Right ventricle myocardium inferior (tissue), 1 donor: ENCODE measurements at regions of chr1 and their contacts with region 1.

Region 1: GRCh38 chr1:183655562-183656075 is 2.5 kb upstream of the APOBEC4 start:
- DNase-seq: peak; percentile 72
- ATAC-seq: peak; percentile 76

Region 2: DNA sequence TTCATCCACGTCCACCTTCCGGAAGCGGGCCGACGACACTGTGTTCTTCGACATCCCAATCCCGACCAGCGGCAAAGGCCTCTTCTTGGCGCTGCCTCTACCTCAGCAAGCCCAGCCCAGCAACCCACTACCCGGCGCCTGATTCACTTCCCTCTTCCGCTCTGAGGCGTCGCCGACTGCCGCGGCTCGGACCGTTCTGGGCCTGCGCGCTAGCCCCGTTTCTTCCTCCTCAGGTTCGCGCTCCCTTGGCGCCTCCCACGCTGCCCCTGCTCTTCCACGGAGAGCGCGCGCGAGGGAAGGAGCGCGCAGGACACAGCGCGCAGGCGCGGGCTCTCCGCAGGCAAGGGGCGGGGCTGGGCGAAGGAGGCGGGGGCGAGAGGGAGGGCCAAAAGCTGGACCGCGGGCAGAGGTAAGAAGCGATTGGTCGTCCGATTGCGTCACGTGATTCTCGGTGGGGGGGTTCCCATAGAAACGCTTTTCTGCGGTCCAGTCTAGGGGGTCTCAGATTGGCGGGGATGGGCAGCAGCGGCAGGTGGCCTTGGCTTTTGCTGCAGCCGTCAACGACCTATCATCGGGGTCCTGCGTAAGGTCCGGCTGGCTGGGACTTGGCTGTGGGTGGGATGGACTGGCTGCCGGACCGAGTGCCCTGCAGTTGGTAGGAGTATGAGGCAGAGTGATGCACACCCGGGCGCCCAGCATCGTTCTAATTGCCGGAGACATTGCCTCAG is 19.8 kb before region 1 on chr1 and contains the start of gene ARPC5:
- intact Hi-C with region 1: loop called (anchors 2 kb)
- DNase-seq: peak; percentile 99
- ATAC-seq: peak; percentile 98
- total RNA-seq, gene ARPC5: 40.2 TPM

Region 3: GRCh38 chr1:183685112-183685713 is 29.6 kb after region 1 on chr1:
- intact Hi-C with region 1: loop called (anchors 2 kb)
- DNase-seq: no peak
- ATAC-seq: no peak